ENCODE measurements at regions of chr12 and their contacts with region 1.

Region 1: GRCh38 chr12:52156736-52157565 is 34.9 kb downstream of the KRT80 start:
- DNase-seq: peak; percentile 93
- H3K4me3 Mint-ChIP-seq: no peak overlapping the region
- H3K27ac Mint-ChIP-seq: peak overlapping the region; percentile 16
- H3K4me1 Mint-ChIP-seq: peaks cover 23% of the 10 kb centered on the region
- H3K27me3 Mint-ChIP-seq: no peaks in the 10 kb centered on the region

Region 2: DNA sequence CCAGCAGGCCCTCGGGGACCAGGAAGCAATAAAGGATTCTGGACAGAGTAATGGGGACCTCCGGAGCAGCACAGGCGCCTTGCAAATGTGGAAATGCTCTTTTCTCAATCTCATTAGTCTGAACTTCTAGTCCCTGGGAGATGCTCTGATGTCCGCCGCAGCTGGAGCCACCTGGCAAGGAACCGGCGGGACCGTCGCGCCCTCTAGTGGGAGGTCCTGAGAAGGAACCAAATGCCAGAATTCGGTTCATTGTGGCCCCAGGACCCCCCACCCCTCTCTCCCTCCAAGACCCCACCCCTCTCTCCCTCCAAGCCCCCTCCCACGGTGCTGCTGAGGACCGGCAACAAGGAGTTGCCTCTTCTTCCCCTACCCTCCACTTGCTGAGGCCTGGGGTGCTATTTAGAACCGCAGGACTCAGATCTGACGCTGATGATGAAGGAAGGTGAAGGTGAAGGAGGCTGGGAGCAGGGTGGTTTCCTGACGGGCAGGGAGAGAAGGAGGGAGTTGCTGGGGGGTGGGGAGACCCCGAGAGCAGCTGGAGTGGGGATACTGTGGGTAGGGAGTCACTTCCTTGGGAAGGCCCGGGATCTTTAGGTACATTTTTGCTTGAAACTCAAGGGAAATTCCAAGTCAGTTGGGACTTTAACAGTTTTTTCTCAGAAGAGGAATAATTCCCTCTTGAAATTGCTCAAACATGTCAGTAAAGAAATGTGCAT is 35.0 kb before region 1 on chr12:
- intact Hi-C with region 1: no loop called
- DNase-seq: peak; percentile 89
- H3K4me3 Mint-ChIP-seq: no peak overlapping the region
- H3K27ac Mint-ChIP-seq: no peak overlapping the region
- H3K4me1 Mint-ChIP-seq: peaks cover 20% of the 10 kb centered on the region
- H3K27me3 Mint-ChIP-seq: peaks cover 18% of the 10 kb centered on the region

Region 3: GRCh38 chr12:52327052-52327829 is 170.3 kb after region 1 on chr12:
- intact Hi-C with region 1: loop called (anchors 1 kb)
- DNase-seq: peak; percentile 91
- H3K4me3 Mint-ChIP-seq: no peak overlapping the region
- H3K27ac Mint-ChIP-seq: no peak overlapping the region
- H3K4me1 Mint-ChIP-seq: peaks cover 11% of the 10 kb centered on the region
- H3K27me3 Mint-ChIP-seq: peaks cover 29% of the 10 kb centered on the region

Region 4: GRCh38 chr12:52473768-52474167 is 316.8 kb after region 1 on chr12 and contains the start of gene KRT6C:
- intact Hi-C with region 1: no loop called
- DNase-seq: peak; percentile 29
- H3K4me3 Mint-ChIP-seq: no peak within 1 kb of the TSS
- H3K27ac Mint-ChIP-seq: no peak within 1 kb of the TSS
- H3K4me1 Mint-ChIP-seq: no peaks in the 10 kb centered on the region
- H3K27me3 Mint-ChIP-seq: peaks cover 8% of the 10 kb centered on the region
- total RNA-seq, gene KRT6C: not detected in 2 replicates

Region 5: GRCh38 chr12:52506858-52507715 is 350.1 kb after region 1 on chr12:
- intact Hi-C with region 1: loop called (anchors 5 kb)
- DNase-seq: peak; percentile 49
- H3K4me3 Mint-ChIP-seq: no peak overlapping the region
- H3K27ac Mint-ChIP-seq: no peak overlapping the region
- H3K4me1 Mint-ChIP-seq: no peaks in the 10 kb centered on the region
- H3K27me3 Mint-ChIP-seq: peaks cover 41% of the 10 kb centered on the region

Region 6: DNA sequence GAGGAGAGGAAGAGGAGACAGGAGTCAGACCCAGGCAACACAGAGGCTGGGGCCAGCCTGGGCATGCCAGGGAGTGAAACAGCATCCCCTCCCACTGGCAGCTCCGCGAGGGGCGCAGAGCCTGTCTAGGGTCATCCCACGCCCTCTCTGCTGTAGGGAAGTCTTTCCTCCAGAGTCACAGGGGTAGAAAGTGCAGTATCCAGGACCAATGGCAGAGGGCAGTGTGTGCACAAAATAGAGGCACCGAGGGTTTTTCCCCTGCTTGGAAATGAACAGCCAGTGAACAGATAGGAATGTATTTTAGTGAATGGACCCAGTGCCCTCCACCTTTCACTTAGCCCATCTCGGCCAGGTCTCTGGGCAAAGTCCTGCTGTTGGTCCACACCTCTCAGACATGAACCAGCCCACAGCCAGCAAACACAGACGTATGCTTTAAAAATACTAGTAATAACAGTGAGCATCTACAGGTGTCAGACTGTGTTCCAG is 426.1 kb after region 1 on chr12:
- intact Hi-C with region 1: loop called (anchors 10 kb)
- DNase-seq: peak; percentile 91
- H3K4me3 Mint-ChIP-seq: no peak overlapping the region
- H3K27ac Mint-ChIP-seq: no peak overlapping the region
- H3K4me1 Mint-ChIP-seq: peaks cover 28% of the 10 kb centered on the region
- H3K27me3 Mint-ChIP-seq: peaks cover 8% of the 10 kb centered on the region

Region 7: DNA sequence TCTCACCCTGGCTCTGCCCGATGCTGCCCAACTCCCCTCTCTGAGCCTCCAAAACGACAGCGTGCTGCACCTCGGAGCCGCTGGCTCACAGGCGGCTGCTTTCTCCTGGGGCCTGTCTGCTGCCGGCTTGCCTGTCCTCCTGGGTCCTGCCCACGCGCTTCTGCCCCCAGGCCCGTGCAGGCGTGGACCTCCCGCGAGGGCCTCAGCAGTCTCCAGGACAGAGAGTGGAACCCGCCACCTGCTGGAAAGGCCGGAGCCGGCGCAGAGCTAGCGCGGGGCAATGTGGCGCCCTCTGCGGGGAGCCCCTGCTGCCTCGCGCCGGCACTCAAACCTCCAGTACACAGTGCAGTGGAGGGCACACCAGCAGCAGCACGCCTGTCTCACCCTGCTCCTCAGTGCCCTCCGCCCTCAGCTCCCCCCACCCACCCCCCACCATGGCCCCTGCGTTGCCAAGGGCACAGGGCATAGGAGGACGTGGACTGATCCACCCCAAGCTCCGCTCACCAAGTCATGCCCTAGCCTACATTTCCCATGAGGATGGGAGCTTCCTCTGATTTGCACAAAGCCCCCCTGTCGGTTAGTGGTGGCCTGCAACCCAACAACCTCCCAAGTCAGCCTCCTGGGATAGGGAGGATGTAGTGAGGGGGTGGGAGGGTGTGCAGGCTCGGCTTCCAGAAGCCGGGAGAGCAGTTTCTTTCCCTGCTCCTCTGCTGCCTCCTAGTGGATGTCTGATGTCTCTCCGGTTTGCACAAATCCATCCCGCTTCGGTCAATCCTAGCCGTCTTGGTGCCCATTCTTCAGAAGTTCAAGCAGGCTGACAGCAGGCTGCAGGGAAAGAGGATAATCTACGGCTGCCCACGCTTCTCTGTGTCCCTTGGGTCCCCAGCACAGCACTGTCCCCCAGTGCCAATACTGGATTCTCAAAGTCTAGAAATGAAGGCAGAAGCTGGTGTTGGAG is 722.7 kb after region 1 on chr12:
- intact Hi-C with region 1: loop called (anchors 5 kb)
- DNase-seq: peak; percentile 93
- H3K4me3 Mint-ChIP-seq: peak overlapping the region; percentile 82
- H3K27ac Mint-ChIP-seq: no peak overlapping the region
- H3K4me1 Mint-ChIP-seq: peaks cover 8% of the 10 kb centered on the region
- H3K27me3 Mint-ChIP-seq: peaks cover 8% of the 10 kb centered on the region

Region 8: GRCh38 chr12:52980693-52981423 is 823.9 kb after region 1 on chr12:
- intact Hi-C with region 1: loop called (anchors 10 kb)
- DNase-seq: peak; percentile 94
- H3K4me3 Mint-ChIP-seq: no peak overlapping the region
- H3K27ac Mint-ChIP-seq: no peak overlapping the region
- H3K4me1 Mint-ChIP-seq: no peaks in the 10 kb centered on the region
- H3K27me3 Mint-ChIP-seq: peaks cover 28% of the 10 kb centered on the region